ENCODE measurements at regions of chr1 and their contacts with region 1.

Region 1: DNA sequence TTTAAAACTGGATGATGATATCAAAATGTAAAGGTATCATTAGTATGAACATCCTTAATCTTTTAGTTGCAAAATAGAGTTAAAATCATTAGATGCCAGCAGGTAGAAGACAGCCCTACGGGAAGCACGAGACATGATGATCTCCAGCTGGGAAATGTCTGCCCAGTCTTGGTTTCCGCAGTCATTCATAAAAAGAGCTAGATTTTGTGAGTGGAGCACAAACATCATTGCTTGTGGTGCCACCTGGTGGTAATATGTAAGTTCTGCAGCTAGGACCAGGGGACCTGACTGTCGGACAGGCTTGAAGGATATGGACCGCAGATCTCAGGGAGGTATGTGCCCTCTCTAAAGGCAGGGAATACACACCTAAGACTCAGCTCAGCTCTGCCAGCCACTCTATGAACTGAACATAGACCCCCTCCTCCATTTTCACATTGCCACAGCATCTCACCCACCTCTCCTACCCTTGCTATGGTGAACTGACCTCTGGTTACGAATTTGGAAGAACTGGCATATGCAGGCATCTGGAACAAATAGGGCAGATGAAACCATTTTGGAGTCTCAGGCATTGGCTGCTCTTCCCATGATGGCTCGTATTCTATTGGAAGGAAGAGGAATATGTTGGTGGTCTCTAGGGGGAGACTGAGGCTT is 9.2 kb downstream of the FCMR start:
- DNase-seq: peak; percentile 96
- H3K4me3 Mint-ChIP-seq: no peak overlapping the region
- H3K27ac Mint-ChIP-seq: no peak overlapping the region
- H3K4me1 Mint-ChIP-seq: peaks cover 28% of the 10 kb centered on the region
- H3K27me3 Mint-ChIP-seq: peaks cover 43% of the 10 kb centered on the region
- CTCF ChIP-seq: peak; percentile 94

Region 2: GRCh38 chr1:206716870-206717673 is 195.5 kb before region 1 on chr1:
- CTCF ChIA-PET with region 1: interaction called, 26 read pairs
- POLR2A ChIA-PET with region 1: interaction called, 7 read pairs
- intact Hi-C with region 1: no loop called
- DNase-seq: no peak
- H3K4me3 Mint-ChIP-seq: no peak overlapping the region
- H3K27ac Mint-ChIP-seq: peak overlapping the region; percentile 9
- H3K4me1 Mint-ChIP-seq: peaks cover 58% of the 10 kb centered on the region
- H3K27me3 Mint-ChIP-seq: no peaks in the 10 kb centered on the region
- CTCF ChIP-seq: no peak

Region 3: GRCh38 chr1:206803221-206803730 is 109.3 kb before region 1 on chr1:
- CTCF ChIA-PET with region 1: interaction called, 243 read pairs
- POLR2A ChIA-PET with region 1: interaction called, 14 read pairs
- intact Hi-C with region 1: no loop called
- DNase-seq: no peak
- H3K4me3 Mint-ChIP-seq: no peak overlapping the region
- H3K27ac Mint-ChIP-seq: no peak overlapping the region
- H3K4me1 Mint-ChIP-seq: peaks cover 5% of the 10 kb centered on the region
- H3K27me3 Mint-ChIP-seq: peaks cover 34% of the 10 kb centered on the region
- CTCF ChIP-seq: no peak

Region 4: GRCh38 chr1:206872139-206872538 is 40.4 kb before region 1 on chr1:
- CTCF ChIA-PET with region 1: interaction called, 34 read pairs
- POLR2A ChIA-PET with region 1: interaction called, 38 read pairs
- intact Hi-C with region 1: no loop called
- DNase-seq: no peak
- H3K4me3 Mint-ChIP-seq: no peak overlapping the region
- H3K27ac Mint-ChIP-seq: no peak overlapping the region
- H3K4me1 Mint-ChIP-seq: peaks cover 24% of the 10 kb centered on the region
- H3K27me3 Mint-ChIP-seq: no peaks in the 10 kb centered on the region
- CTCF ChIP-seq: no peak

Region 5: GRCh38 chr1:206955476-206956451 is 43.2 kb after region 1 on chr1:
- CTCF ChIA-PET with region 1: interaction called, 26 read pairs
- POLR2A ChIA-PET with region 1: interaction called, 4 read pairs
- intact Hi-C with region 1: no loop called
- DNase-seq: no peak
- H3K4me3 Mint-ChIP-seq: no peak overlapping the region
- H3K27ac Mint-ChIP-seq: no peak overlapping the region
- H3K4me1 Mint-ChIP-seq: peaks cover 9% of the 10 kb centered on the region
- H3K27me3 Mint-ChIP-seq: no peaks in the 10 kb centered on the region
- CTCF ChIP-seq: no peak

Region 6: DNA sequence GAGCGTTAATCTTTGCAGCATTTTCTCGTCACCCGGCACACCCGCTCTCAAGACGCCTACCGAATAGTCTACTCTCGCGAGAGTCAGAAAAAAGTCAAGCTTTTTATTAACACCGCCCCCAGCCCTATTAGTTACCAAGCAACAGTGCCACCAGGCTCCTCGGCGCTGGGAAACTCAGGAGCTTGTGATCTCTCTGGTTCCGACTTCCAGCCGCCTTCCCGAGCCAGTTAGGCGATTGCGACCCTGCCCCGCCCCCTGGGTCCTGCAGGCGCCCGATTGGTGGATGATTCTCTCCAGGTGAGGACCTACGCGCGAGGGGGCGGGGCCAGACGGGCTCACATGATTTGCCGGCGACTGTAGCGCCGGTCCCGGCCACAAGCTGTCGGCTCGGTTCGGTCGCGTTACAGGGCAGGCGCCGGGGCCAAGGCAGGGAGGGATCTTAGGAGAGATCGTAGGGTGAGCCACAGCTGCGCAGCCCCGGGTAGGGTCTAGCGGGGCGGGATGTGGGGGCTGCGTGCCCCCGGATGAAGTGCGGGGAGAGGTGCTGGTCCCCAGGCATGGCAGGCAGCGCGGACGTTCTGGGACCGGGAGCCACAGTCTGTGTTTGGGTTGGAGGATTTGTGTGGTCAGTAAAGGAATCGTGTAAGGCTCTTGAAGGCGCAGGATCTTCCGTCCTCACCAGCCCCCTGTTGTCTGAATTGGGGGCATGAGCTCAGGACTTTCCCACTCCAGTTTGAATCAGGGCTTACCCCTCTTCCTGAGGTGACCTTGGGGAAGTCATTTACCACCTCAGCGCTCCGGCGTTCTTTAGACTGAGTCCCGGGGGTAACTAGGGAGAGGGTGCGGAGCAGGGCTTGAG is 140.6 kb after region 1 on chr1 and contains the start of gene PFKFB2:
- CTCF ChIA-PET with region 1: interaction called, 5 read pairs
- POLR2A ChIA-PET with region 1: interaction called, 6 read pairs
- intact Hi-C with region 1: loop called (anchors 5 kb)
- DNase-seq: peak; percentile 100
- H3K4me3 Mint-ChIP-seq: peak within 1 kb of the TSS; percentile 89
- H3K27ac Mint-ChIP-seq: peak within 1 kb of the TSS; percentile 95
- H3K4me1 Mint-ChIP-seq: peaks cover 51% of the 10 kb centered on the region
- H3K27me3 Mint-ChIP-seq: no peaks in the 10 kb centered on the region
- CTCF ChIP-seq: peak; percentile 24
- total RNA-seq, gene PFKFB2: 21.1 and 22.0 TPM in 2 replicates

Region 7: GRCh38 chr1:207103892-207104373 is 191.4 kb after region 1 on chr1 and contains the start of gene C4BPA:
- CTCF ChIA-PET with region 1: no interaction called
- POLR2A ChIA-PET with region 1: no interaction called
- intact Hi-C with region 1: no loop called
- DNase-seq: peak; percentile 40
- H3K4me3 Mint-ChIP-seq: no peak within 1 kb of the TSS
- H3K27ac Mint-ChIP-seq: no peak within 1 kb of the TSS
- H3K4me1 Mint-ChIP-seq: no peaks in the 10 kb centered on the region
- H3K27me3 Mint-ChIP-seq: peaks cover 44% of the 10 kb centered on the region
- CTCF ChIP-seq: no peak
- total RNA-seq, gene C4BPA: not detected in 2 replicates

Region 8: DNA sequence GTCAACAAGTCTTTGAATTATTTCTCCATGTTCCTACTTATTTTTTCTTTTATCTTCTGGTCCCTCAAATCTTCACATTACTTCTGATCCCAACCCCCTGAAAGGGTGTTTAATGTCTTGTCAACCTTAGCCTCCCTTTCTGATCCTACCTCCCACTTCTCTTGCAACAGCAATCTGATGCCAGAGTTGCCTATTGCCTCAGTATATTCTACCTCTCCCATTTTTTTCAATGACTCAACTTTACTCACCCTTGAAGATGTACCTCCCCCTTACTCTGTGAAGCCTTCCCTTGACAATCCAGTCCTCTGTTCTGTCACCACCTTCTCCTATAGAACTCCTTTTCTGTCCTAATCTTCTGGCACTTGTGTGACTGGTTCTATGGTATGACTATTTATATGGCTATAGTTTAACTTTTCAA is 309.4 kb after region 1 on chr1:
- CTCF ChIA-PET with region 1: no interaction called
- POLR2A ChIA-PET with region 1: no interaction called
- intact Hi-C with region 1: no loop called
- DNase-seq: peak; percentile 90
- H3K4me3 Mint-ChIP-seq: no peak overlapping the region
- H3K27ac Mint-ChIP-seq: no peak overlapping the region
- H3K4me1 Mint-ChIP-seq: peaks cover 33% of the 10 kb centered on the region
- H3K27me3 Mint-ChIP-seq: no peaks in the 10 kb centered on the region
- CTCF ChIP-seq: no peak

Region 9: DNA sequence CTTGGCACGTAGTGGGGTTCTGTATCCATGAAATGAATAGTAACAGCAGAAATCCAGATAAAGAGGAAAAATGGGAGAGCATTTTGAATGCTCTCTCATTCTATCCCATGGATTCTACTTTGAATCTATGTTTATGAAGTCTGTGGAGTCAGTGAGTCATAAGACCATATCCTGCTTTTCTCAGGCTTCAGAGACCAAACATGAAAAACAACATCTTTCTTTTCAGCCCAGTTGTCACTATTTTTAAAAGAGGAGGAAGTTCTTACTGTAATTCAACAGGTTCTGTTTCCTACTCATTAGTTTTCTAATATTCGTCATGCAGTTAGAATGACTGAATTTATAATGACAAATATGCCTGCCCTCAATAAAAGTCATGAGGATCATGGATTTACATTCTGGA is 369.5 kb after region 1 on chr1:
- CTCF ChIA-PET with region 1: no interaction called
- POLR2A ChIA-PET with region 1: no interaction called
- intact Hi-C with region 1: no loop called
- DNase-seq: no peak
- H3K4me3 Mint-ChIP-seq: no peak overlapping the region
- H3K27ac Mint-ChIP-seq: no peak overlapping the region
- H3K4me1 Mint-ChIP-seq: peaks cover 13% of the 10 kb centered on the region
- H3K27me3 Mint-ChIP-seq: no peaks in the 10 kb centered on the region
- CTCF ChIP-seq: no peak

Region 10: DNA sequence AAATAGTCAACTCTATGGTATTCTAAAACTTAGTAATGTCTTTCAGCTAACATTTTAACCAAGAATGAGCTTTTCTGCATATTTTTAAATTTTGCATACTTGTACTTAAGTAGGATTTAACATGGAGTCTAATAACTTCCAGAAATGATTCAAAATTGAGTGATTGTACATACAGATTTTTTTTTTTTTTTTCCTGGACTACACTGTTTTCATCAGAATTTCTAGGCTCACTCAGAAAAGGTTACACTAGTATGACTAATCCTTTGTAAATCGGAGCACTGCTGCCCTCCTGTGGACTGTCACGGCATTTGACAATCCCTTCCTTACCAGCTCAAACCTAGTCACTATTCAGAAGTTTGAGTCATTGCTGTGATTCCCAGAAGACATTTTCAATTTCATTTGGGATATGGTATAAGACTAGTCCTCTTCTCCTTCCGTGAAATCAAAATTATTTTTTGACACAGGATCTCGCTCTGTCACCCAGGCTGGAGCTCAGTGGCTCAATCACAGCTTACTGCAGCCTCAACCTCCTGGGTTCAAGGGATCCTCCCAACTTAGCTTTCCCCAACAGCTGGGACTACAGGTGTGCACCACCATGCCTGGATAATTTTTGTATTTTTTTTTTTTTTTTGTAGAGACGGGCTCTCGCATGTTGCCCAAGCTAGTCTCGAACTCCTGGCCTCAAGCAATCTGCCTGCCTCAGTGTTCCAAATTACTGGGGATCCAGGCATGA is 884.8 kb after region 1 on chr1:
- CTCF ChIA-PET with region 1: no interaction called
- POLR2A ChIA-PET with region 1: no interaction called
- intact Hi-C with region 1: no loop called
- DNase-seq: peak; percentile 97
- H3K4me3 Mint-ChIP-seq: no peak overlapping the region
- H3K27ac Mint-ChIP-seq: peak overlapping the region; percentile 46
- H3K4me1 Mint-ChIP-seq: peaks cover 14% of the 10 kb centered on the region
- H3K27me3 Mint-ChIP-seq: no peaks in the 10 kb centered on the region
- CTCF ChIP-seq: peak; percentile 95